Activated T-helper 2 cell treated with anti-CD3 and anti-CD28 coated beads, Interferon-gamma antibody, Interleukin-2, Interleukin-4, amounts not matched to agents 10 μg/mL and 5 μg/mL and 100 μg/mL, durations not matched to agents 14 hours and 24 hours and 36 hours (primary cell): ENCODE measurements at regions of chr6 and their contacts with region 1.

Region 1: DNA sequence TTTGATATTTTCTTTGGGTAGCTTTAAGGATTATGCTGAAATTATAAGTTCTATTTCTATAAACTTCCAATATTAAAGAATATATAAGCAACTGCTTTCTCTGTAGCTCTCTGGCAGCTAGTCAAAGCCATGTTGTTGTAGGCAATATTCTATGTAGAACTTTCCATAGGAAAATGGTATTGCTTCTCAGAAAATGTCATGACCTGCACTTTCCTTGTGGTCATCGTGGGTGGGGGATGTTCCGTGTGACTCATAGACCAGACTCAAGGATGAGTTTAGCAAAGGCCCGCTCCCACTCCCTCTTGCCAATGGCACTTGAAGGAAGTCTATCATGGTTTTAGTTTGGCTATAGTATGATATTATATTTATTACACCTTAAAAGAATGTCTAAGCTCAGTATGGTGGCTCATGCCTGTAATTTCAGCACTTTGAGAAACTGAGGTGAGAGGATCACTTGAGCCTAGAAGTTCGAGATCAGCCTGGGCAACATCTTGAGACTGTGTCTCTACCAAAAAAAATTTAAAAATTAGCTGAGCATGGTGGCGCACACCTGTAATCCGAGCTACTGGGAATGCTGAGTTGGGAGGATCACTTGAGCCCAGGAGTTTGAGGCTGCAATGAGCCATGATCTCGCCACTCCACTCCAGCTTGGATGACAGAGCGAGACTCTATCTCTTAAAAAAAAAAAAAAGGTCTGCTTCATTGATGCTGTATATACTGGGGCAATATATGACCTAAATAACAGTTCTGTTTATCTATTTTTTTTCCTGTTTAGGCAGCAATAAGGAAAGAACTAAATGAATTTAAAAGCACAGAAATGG is 36.6 kb upstream of the LTV1 start:
- DNase-seq: peak; percentile 19
- H3K4me3 Mint-ChIP-seq: no peak overlapping the region
- H3K27ac Mint-ChIP-seq: peak overlapping the region; percentile 84
- H3K4me1 Mint-ChIP-seq: peaks cover 46% of the 10 kb centered on the region
- H3K27me3 Mint-ChIP-seq: no peaks in the 10 kb centered on the region

Region 2: DNA sequence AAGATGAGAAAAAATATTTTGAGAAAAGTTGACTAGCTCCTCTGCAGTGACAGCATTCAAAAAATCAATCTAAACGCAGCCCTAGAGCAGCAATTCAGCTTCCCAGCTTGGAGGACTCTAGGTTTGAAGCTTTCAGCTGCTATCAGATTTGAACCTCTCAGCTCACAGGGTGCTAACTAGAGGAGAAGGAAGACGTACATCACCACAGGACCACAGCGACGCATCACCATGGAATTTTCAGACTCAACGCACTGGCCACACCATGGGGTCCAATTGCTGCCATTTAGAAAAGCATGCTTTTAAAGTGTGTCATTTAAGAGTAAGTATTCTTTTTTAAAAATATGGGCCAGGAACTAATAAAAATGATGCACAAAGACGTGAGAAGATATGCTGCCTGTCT is 250.0 kb before region 1 on chr6:
- intact Hi-C with region 1: loop called (anchors 5 kb)
- DNase-seq: no peak
- H3K4me3 Mint-ChIP-seq: no peak overlapping the region
- H3K27ac Mint-ChIP-seq: peak overlapping the region; percentile 80
- H3K4me1 Mint-ChIP-seq: peaks cover 73% of the 10 kb centered on the region
- H3K27me3 Mint-ChIP-seq: no peaks in the 10 kb centered on the region

Region 3: GRCh38 chr6:143734641-143735063 is 71.8 kb before region 1 on chr6:
- intact Hi-C with region 1: loop called (anchors 1 kb)
- DNase-seq: no peak
- H3K4me3 Mint-ChIP-seq: no peak overlapping the region
- H3K27ac Mint-ChIP-seq: no peak overlapping the region
- H3K4me1 Mint-ChIP-seq: peaks cover 33% of the 10 kb centered on the region
- H3K27me3 Mint-ChIP-seq: no peaks in the 10 kb centered on the region

Region 4: GRCh38 chr6:143859888-143860660 is 53.6 kb after region 1 on chr6:
- intact Hi-C with region 1: loop called (anchors 1 kb)
- DNase-seq: no peak
- H3K4me3 Mint-ChIP-seq: no peak overlapping the region
- H3K27ac Mint-ChIP-seq: no peak overlapping the region
- H3K4me1 Mint-ChIP-seq: peaks cover 23% of the 10 kb centered on the region
- H3K27me3 Mint-ChIP-seq: no peaks in the 10 kb centered on the region